Spleen (tissue), 13 donors: ENCODE measurements at regions of chr15 and their contacts with region 1.

Region 1: GRCh38 chr15:44296625-44297524 is 8.4 kb downstream of the GOLM2 start:
- DNase-seq: no peak
- H3K4me3 ChIP-seq: no peak overlapping the region
- H3K27ac ChIP-seq: peak overlapping the region in 5 of 8 donors; percentile 19 to 65 (median 32)
- H3K4me1 ChIP-seq: peaks cover 11 to 67% (median 41%) of the 10 kb centered on the region in 6 donors
- H3K27me3 ChIP-seq: no peaks in the 10 kb centered on the region
- CTCF ChIP-seq: no peak
- POLR2A ChIP-seq: no peak

Region 2: GRCh38 chr15:44219073-44219472 is 77.8 kb before region 1 on chr15:
- intact Hi-C with region 1: no loop called
- DNase-seq: no peak
- H3K4me3 ChIP-seq: no peak overlapping the region
- H3K27ac ChIP-seq: no peak overlapping the region
- H3K4me1 ChIP-seq: peaks cover 0 to 7% (median 0%) of the 10 kb centered on the region in 6 donors
- H3K27me3 ChIP-seq: peaks cover 0 to 25% (median 0%) of the 10 kb centered on the region in 7 donors
- CTCF ChIP-seq: no peak
- POLR2A ChIP-seq: no peak

Region 3: DNA sequence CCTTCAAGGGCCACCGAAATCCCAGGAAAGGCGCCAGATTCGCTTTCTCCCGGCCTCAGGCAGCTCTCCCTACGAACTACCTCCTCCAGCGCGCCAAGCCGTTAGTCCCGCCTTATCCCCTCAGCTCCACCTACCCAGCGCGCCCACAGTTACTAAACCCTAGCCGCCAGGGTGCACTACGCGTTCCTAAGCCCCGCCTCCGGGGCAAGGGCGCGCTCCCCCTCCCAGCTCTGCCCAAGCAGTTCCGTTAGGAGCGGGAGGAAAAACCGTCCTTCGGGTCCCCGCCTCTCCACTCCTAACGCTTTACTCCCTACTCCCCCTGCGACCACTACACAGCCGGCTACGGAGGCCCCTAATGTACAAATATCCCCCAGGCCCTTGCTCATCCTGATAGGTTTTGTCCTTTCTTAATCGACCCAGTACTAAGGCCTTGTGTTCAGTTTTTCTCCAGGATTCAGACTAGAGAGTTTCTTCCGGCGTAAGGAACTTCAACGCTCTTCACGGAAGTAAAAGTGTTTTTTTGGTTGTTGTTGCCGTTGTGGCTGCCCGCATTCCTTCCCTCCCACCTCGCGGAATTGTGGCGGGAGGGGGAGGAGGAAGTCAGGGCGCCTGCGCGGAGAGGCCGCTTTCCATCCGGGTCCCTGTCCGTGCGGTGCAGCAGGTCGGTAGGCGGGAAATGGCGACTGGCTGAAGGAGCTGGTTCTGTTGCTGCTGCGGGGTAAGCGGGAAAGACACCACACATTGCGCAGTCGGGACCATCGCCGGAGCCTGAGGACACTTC is 130.3 kb after region 1 on chr15 and contains the start of gene CTDSPL2:
- intact Hi-C with region 1: loop called (anchors 10 kb)
- DNase-seq: peak; percentile 99
- H3K4me3 ChIP-seq: peak within 1 kb of the TSS; percentile 84 to 90 (median 86)
- H3K27ac ChIP-seq: peak within 1 kb of the TSS; percentile 92 to 98 (median 96)
- H3K4me1 ChIP-seq: peaks cover 19 to 59% (median 40%) of the 10 kb centered on the region in 6 donors
- H3K27me3 ChIP-seq: no peaks in the 10 kb centered on the region
- CTCF ChIP-seq: peak in 9 of 11 experiments; percentile 30 to 76 (median 52)
- POLR2A ChIP-seq: peak in 1 of 3 donors; percentile 21
- total RNA-seq, gene CTDSPL2: 48.7 to 73.7 (median 53.7) TPM